ENCODE measurements at regions of chr5 and their contacts with region 1.

Region 1: DNA sequence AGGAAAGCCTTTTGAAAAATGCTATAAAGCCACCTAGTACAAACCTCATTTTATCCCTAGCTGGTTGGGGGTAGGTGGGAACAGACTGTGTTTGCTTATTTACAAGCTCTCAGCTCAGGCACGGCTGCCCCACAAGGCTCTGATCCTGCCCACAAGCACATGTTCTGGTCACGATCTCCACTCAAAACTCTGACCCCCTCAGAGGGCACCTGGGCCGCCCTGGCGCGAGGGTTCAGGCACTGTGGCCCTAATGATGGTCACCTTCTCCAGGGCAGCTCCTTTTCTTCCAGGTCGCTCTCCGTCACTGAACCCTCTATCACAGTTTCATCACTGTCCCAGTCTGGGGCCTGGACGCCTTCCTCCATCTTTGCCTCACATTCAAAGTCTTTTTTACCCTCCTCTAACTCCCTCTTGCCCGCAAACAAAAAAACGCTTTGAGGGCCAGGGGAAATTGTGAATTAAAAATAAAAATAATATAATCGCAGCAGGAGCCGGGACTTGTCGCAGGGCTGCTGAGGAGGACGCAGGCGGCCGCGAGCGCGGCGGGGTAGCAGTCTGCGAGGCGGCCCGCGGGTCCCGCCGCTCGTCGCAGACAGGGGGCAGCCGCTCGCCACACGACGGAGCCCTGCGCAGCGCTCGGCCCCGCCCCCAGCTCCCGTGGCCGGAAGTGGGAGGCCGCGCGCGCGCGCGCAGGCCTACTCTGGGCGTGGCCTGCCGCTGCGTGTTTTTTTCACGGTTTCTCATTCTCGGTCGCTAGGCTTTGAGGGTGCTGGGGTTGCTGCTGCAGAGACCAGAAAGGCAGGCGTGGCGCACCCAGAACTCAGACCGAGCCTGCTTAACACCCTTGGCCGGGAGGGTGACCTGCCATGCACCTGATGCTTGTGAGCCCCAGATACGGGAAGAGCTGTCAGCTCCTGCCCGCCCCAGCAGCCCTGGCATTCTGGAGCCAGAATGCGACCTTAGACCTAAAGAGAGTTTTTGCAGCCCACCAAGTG is at the start of gene ANKRD31:
- DNase-seq: peak; percentile 83 to 97 (median 93)
- ATAC-seq: peak; percentile 100
- H3K4me3 ChIP-seq: peak within 1 kb of the TSS; percentile 69
- H3K4me3 Mint-ChIP-seq: peak within 1 kb of the TSS; percentile 78 to 99 (median 96)
- H3K27ac ChIP-seq: peak within 1 kb of the TSS; percentile 80
- H3K27ac Mint-ChIP-seq: peak within 1 kb of the TSS; percentile 89 to 99 (median 98)
- H3K4me1 ChIP-seq: peaks cover 0 to 17% of the 10 kb centered on the region in 2 donors
- H3K4me1 Mint-ChIP-seq: peaks cover 3 to 22% (median 18%) of the 10 kb centered on the region in 7 donors
- H3K27me3 ChIP-seq: no peaks in the 10 kb centered on the region
- H3K27me3 Mint-ChIP-seq: peaks cover 0 to 4% (median 0%) of the 10 kb centered on the region in 5 donors
- total RNA-seq, gene ANKRD31: 0.29 to 1.6 (median 0.93) TPM

Region 2: DNA sequence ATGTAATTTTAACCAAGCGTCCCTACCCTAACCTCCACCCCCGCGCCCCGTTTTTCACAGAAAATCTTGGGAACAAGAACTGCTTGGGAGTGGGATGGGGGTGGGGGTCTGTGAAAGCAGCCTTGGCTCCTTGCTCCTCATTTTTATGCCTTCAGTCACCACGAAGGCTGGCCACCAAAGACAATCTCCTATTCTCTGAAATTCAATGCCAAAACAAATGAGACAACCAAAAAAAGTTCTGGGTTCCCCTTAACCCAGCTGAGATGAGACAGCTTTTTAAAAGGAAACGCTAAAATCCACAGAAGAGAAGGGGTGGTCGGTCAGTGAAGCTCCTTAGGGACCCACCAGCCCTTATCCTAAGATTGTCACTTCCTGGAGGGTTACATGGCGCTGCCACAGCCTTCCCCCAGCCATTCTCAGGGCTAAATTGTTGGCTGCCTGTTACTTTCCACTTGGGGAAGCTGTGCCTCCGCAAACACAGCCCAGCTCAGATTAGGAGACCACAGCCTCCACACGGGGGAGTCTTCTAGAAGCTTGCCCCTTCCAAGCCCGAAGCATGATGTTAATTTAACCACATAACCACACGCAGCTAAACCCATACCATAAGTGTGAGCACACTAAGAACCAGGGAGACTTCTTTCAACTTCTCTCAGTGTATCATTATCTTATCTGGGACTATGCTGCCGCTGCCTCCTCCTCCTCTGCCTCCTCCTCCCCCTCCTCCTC is 1924.3 kb before region 1 on chr5:
- CTCF ChIA-PET with region 1: no interaction called
- POLR2A ChIA-PET with region 1: no interaction called
- intact Hi-C with region 1: no loop called
- DNase-seq: peak in 3 of 9 donors; percentile 18 to 25 (median 24)
- ATAC-seq: peak; percentile 31
- H3K4me3 ChIP-seq: no peak overlapping the region
- H3K4me3 Mint-ChIP-seq: peak overlapping the region in 1 of 10 donors; percentile 11
- H3K27ac ChIP-seq: no peak overlapping the region
- H3K27ac Mint-ChIP-seq: no peak overlapping the region
- H3K4me1 ChIP-seq: peaks cover 0 to 3% of the 10 kb centered on the region in 2 donors
- H3K4me1 Mint-ChIP-seq: peaks cover 0 to 9% (median 3%) of the 10 kb centered on the region in 7 donors
- H3K27me3 ChIP-seq: peaks cover 8 to 18% of the 10 kb centered on the region in 2 donors
- H3K27me3 Mint-ChIP-seq: peaks cover 76 to 84% (median 81%) of the 10 kb centered on the region in 5 donors

Region 3: GRCh38 chr5:74684900-74685851 is 551.4 kb before region 1 on chr5 and contains the start of gene HEXB:
- CTCF ChIA-PET with region 1: no interaction called
- POLR2A ChIA-PET with region 1: no interaction called
- intact Hi-C with region 1: loop called (anchors 5 to 10 kb)
- DNase-seq: peak; percentile 55 to 89 (median 69)
- ATAC-seq: peak; percentile 91
- H3K4me3 ChIP-seq: peak within 1 kb of the TSS; percentile 86
- H3K4me3 Mint-ChIP-seq: peak within 1 kb of the TSS; percentile 76 to 92 (median 86)
- H3K27ac ChIP-seq: peak within 1 kb of the TSS; percentile 78
- H3K27ac Mint-ChIP-seq: peak within 1 kb of the TSS; percentile 76 to 92 (median 86)
- H3K4me1 ChIP-seq: peaks cover 7 to 13% of the 10 kb centered on the region in 2 donors
- H3K4me1 Mint-ChIP-seq: peaks cover 16 to 34% (median 30%) of the 10 kb centered on the region in 7 donors
- H3K27me3 ChIP-seq: no peaks in the 10 kb centered on the region
- H3K27me3 Mint-ChIP-seq: peaks cover 0 to 17% (median 0%) of the 10 kb centered on the region in 5 donors
- total RNA-seq, gene HEXB: 37.7 to 88.9 (median 64.2) TPM

Region 4: DNA sequence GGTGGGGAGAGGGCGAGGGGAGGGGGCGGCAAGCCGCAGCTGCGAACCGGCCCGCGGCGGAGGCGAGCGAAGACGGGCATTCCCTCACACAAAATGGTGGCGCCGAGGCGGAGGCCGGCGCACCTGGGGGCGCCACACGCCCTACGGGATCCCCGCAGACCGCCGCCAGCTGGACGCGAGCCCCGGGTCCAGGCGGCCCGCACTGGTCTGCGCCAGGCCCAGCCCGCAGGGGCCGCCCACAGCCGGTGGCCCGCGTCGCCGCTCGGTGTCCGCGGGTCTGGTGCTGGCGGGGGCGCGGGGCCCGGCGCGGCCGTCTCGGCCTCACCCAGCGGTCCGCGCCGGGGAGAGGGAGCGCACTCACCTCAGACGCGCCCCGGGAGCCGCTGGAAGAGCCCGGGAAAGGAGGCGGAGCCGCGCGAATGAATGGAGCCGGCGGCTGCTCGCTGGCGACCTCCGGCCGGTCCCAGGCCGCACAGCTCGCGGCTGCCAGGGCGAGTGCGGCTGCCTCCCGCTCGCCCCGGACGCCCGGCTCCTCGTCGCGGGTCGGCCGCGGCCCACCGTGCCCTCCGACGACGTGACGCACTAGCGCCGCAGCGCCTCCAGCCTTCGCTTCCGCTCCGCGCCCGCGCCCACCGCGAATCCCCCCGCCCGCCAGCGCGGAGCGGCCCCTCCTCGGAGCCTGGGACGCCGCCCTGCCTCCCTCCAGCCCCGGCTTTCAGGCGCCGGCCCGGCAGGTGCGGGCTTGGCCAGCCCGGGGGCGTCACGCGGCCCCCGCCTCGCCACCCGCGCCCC is 370.6 kb before region 1 on chr5 and contains the start of gene FAM169A:
- CTCF ChIA-PET with region 1: no interaction called
- POLR2A ChIA-PET with region 1: interaction called, 5 read pairs
- intact Hi-C with region 1: loop called in 1 of 2 experiments (anchors 5 kb)
- DNase-seq: peak; percentile 40 to 71 (median 61)
- ATAC-seq: peak; percentile 81
- H3K4me3 ChIP-seq: peak within 1 kb of the TSS; percentile 69
- H3K4me3 Mint-ChIP-seq: peak within 1 kb of the TSS; percentile 87 to 99 (median 97)
- H3K27ac ChIP-seq: peak within 1 kb of the TSS; percentile 78
- H3K27ac Mint-ChIP-seq: peak within 1 kb of the TSS; percentile 79 to 97 (median 95)
- H3K4me1 ChIP-seq: peaks cover 4 to 8% of the 10 kb centered on the region in 2 donors
- H3K4me1 Mint-ChIP-seq: peaks cover 7 to 49% (median 42%) of the 10 kb centered on the region in 7 donors
- H3K27me3 ChIP-seq: no peaks in the 10 kb centered on the region
- H3K27me3 Mint-ChIP-seq: peaks cover 0 to 26% (median 0%) of the 10 kb centered on the region in 5 donors
- total RNA-seq, gene FAM169A: 2.3 to 22.4 (median 15.6) TPM

Region 5: GRCh38 chr5:74934949-74935751 is 301.5 kb before region 1 on chr5:
- CTCF ChIA-PET with region 1: interaction called, 6 read pairs
- POLR2A ChIA-PET with region 1: interaction called, 8 read pairs
- intact Hi-C with region 1: loop called (anchors 1 to 5 kb)
- DNase-seq: peak in 8 of 9 donors; percentile 14 to 65 (median 44)
- ATAC-seq: peak; percentile 79
- H3K4me3 ChIP-seq: peak overlapping the region; percentile 34
- H3K4me3 Mint-ChIP-seq: peak overlapping the region; percentile 65 to 84 (median 76)
- H3K27ac ChIP-seq: peak overlapping the region; percentile 50
- H3K27ac Mint-ChIP-seq: peak overlapping the region; percentile 52 to 89 (median 85)
- H3K4me1 ChIP-seq: peaks cover 9 to 20% of the 10 kb centered on the region in 2 donors
- H3K4me1 Mint-ChIP-seq: peaks cover 13 to 50% (median 42%) of the 10 kb centered on the region in 7 donors
- H3K27me3 ChIP-seq: no peaks in the 10 kb centered on the region
- H3K27me3 Mint-ChIP-seq: peaks cover 0 to 6% (median 0%) of the 10 kb centered on the region in 5 donors

Region 6: DNA sequence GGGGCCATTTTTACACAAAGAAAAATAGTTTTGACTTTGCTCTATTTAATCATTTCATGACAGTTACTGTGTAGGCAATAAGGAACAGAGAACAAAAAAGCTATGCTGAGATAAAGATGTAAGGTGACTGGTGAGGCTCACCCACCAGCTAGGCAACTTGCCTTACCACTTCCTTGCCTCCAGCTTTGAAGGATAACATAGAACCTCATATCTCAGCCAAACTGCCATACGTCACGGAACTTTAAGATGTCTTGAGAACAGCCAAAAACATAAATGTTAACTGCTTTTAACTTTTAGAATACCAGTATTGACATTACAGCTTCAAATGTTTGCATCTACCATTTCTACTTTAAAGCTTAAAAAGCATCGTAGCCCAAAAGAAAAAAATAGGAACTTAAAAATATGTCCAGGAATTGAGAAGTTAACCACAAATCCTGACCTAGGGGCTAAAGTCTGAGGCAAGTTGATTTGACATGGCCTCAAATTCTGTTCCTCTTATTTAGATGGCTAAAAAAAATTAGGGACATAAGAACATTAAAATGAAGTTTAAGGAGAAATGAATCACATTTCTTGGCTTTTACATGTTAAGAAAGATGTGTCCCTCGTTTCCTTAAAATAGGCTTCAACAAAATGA is 176.6 kb before region 1 on chr5:
- CTCF ChIA-PET with region 1: interaction called, 10 read pairs
- POLR2A ChIA-PET with region 1: interaction called, 48 read pairs
- intact Hi-C with region 1: loop called in 1 of 2 experiments (anchors 2 kb)
- DNase-seq: peak in 7 of 9 donors; percentile 79 to 96 (median 92)
- ATAC-seq: peak; percentile 96
- H3K4me3 ChIP-seq: no peak overlapping the region
- H3K4me3 Mint-ChIP-seq: peak overlapping the region in 9 of 10 donors; percentile 68 to 85 (median 75)
- H3K27ac ChIP-seq: peak overlapping the region; percentile 77
- H3K27ac Mint-ChIP-seq: peak overlapping the region; percentile 70 to 99 (median 98)
- H3K4me1 ChIP-seq: peaks cover 32 to 81% of the 10 kb centered on the region in 2 donors
- H3K4me1 Mint-ChIP-seq: peaks cover 25 to 96% (median 83%) of the 10 kb centered on the region in 7 donors
- H3K27me3 ChIP-seq: no peaks in the 10 kb centered on the region
- H3K27me3 Mint-ChIP-seq: peaks cover 0 to 5% (median 0%) of the 10 kb centered on the region in 5 donors

Region 7: DNA sequence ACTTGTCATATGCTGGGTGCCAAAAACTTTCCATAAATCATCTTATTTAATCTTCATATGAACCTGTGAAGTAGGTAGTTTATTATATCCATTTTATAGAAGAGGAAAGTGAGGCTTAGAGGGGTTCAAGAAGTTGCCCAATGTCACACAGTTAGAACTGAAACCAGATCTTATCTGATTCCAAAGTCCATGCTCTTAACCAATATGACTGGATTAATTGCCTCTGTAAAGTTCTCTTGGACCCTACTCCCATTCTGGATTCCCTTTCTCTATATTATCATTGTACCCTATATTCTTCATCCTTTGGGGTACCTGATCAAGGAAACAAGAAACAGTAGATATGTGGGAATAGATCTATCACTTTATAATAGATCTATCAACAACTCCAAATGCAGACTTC is 119.8 kb before region 1 on chr5:
- CTCF ChIA-PET with region 1: no interaction called
- POLR2A ChIA-PET with region 1: no interaction called
- intact Hi-C with region 1: no loop called
- DNase-seq: no peak
- ATAC-seq: no peak
- H3K4me3 ChIP-seq: no peak overlapping the region
- H3K4me3 Mint-ChIP-seq: no peak overlapping the region
- H3K27ac ChIP-seq: no peak overlapping the region
- H3K27ac Mint-ChIP-seq: no peak overlapping the region
- H3K4me1 ChIP-seq: peaks cover 0 to under 1% of the 10 kb centered on the region in 2 donors
- H3K4me1 Mint-ChIP-seq: peaks cover 0 to 10% (median 4%) of the 10 kb centered on the region in 7 donors
- H3K27me3 ChIP-seq: no peaks in the 10 kb centered on the region
- H3K27me3 Mint-ChIP-seq: no peaks in the 10 kb centered on the region

Region 8: GRCh38 chr5:75265731-75266130 is 29.1 kb after region 1 on chr5:
- CTCF ChIA-PET with region 1: interaction called, 6 read pairs
- POLR2A ChIA-PET with region 1: interaction called, 3 read pairs
- intact Hi-C with region 1: loop called in 1 of 2 experiments (anchors 1 kb)
- DNase-seq: peak in 7 of 9 donors; percentile 27 to 65 (median 55)
- ATAC-seq: peak; percentile 75
- H3K4me3 ChIP-seq: no peak overlapping the region
- H3K4me3 Mint-ChIP-seq: no peak overlapping the region
- H3K27ac ChIP-seq: no peak overlapping the region
- H3K27ac Mint-ChIP-seq: peak overlapping the region in 1 of 9 donors; percentile 56
- H3K4me1 ChIP-seq: no peaks in the 10 kb centered on the region
- H3K4me1 Mint-ChIP-seq: peaks cover 0 to 5% (median 0%) of the 10 kb centered on the region in 7 donors
- H3K27me3 ChIP-seq: no peaks in the 10 kb centered on the region
- H3K27me3 Mint-ChIP-seq: peaks cover 0 to 11% (median 4%) of the 10 kb centered on the region in 5 donors

Region 9: GRCh38 chr5:75717082-75717922 is 480.7 kb after region 1 on chr5 and contains the start of gene POC5:
- CTCF ChIA-PET with region 1: no interaction called
- POLR2A ChIA-PET with region 1: no interaction called
- intact Hi-C with region 1: loop called (anchors 1 to 10 kb)
- DNase-seq: peak; percentile 93 to 99 (median 98)
- ATAC-seq: peak; percentile 97
- H3K4me3 ChIP-seq: peak within 1 kb of the TSS; percentile 74
- H3K4me3 Mint-ChIP-seq: peak within 1 kb of the TSS; percentile 93 to 100 (median 99)
- H3K27ac ChIP-seq: peak within 1 kb of the TSS; percentile 78
- H3K27ac Mint-ChIP-seq: peak within 1 kb of the TSS; percentile 92 to 100 (median 97)
- H3K4me1 ChIP-seq: peaks cover 5 to 8% of the 10 kb centered on the region in 2 donors
- H3K4me1 Mint-ChIP-seq: peaks cover 26 to 47% (median 37%) of the 10 kb centered on the region in 7 donors
- H3K27me3 ChIP-seq: no peaks in the 10 kb centered on the region
- H3K27me3 Mint-ChIP-seq: peaks cover 0 to 10% (median 0%) of the 10 kb centered on the region in 5 donors
- total RNA-seq, gene POC5: 8.5 to 17.9 (median 15.0) TPM

Region 10: DNA sequence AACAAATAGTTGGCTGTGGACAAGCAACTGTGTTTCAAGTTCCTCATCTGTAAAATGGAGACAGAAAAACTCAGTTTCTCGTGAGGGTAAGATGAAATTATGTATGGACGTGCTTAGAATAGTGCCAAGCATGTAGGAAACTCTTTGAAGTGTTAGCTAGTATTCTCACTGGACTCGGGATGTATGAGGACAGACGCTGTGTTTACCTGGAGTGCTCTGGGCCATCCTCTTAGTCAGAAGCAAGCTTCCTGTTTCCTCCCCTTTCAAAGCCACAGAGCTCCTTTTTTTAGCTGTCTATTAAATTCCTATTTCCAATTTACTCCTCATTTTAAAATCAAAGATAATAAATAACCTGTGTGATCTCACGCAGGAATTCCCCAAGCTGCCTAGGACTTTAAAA is 1142.7 kb after region 1 on chr5:
- CTCF ChIA-PET with region 1: no interaction called
- POLR2A ChIA-PET with region 1: no interaction called
- intact Hi-C with region 1: no loop called
- DNase-seq: no peak
- ATAC-seq: peak; percentile 57
- H3K4me3 ChIP-seq: no peak overlapping the region
- H3K4me3 Mint-ChIP-seq: peak overlapping the region in 4 of 10 donors; percentile 18 to 33 (median 26)
- H3K27ac ChIP-seq: no peak overlapping the region
- H3K27ac Mint-ChIP-seq: peak overlapping the region in 4 of 9 donors; percentile 1 to 67 (median 46)
- H3K4me1 ChIP-seq: peaks cover 16 to 21% of the 10 kb centered on the region in 2 donors
- H3K4me1 Mint-ChIP-seq: peaks cover 23 to 51% (median 38%) of the 10 kb centered on the region in 7 donors
- H3K27me3 ChIP-seq: no peaks in the 10 kb centered on the region
- H3K27me3 Mint-ChIP-seq: peaks cover 0 to 2% (median 0%) of the 10 kb centered on the region in 5 donors